Ascending aorta (tissue), 2 donors: ENCODE measurements at regions of chr2 and their contacts with region 1.

Region 1: GRCh38 chr2:128469203-128469602 is 150.5 kb upstream of the HS6ST1 start:
- DNase-seq: no peak
- H3K4me3 ChIP-seq: no peak overlapping the region
- H3K27ac ChIP-seq: no peak overlapping the region
- H3K4me1 ChIP-seq: peaks cover 0 to 4% of the 10 kb centered on the region in 2 donors
- H3K27me3 ChIP-seq: no peaks in the 10 kb centered on the region
- CTCF ChIP-seq: no peak

Region 2: DNA sequence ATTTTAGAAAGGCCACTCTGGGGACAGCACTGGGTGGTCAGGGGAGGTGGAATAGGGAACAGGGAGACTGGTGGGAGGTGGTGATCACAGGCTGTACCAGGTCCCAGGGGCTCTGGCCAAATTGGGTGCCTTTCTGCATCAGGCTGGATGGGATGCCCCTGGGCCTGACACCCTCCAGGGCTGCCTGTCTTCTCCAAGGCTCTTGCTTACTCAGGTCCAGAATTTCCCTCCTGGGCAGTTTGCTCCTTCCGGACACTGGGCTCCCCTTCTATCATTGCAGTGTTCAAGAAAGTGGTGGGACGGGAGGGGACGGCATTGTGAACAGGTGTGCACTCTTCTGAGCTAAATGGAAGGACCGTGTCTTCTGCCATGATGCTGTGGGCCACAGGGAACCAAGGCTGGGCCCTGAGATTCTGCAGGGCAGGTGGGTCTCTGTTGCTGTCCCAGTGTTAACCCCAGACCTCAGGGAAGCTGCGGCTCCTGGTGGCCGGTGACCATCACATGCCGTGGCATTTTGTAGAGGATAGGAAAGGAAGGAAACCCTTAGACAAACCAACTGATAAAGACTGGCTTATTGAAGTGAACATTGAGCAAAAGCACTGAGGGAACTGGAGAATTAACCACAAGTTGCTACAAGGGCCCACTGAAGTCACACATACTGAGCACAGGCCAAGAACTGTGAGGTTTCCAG is 56.9 kb before region 1 on chr2:
- intact Hi-C with region 1: no loop called
- DNase-seq: peak in 1 of 2 donors; percentile 50
- H3K4me3 ChIP-seq: no peak overlapping the region
- H3K27ac ChIP-seq: no peak overlapping the region
- H3K4me1 ChIP-seq: no peaks in the 10 kb centered on the region
- H3K27me3 ChIP-seq: no peaks in the 10 kb centered on the region
- CTCF ChIP-seq: no peak

Region 3: DNA sequence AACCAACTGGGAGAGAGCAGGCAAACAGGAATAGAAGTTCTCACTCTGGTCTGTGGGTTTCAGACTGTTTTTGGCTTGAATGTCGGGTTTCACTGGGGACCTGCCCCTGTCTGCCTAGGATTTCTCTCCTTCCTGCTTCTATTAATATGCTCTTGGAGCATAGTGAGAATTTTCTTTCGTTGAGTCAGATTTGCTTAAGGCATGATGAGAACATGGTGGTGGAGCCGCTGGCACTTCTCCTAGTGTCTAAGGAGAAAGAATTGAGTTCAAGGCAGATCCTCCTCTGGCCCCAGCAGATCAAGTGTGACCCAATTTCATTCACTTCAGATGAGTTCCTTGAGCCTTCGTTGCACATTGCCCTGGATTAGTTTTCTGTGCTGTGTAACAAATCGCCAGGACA is 46.6 kb before region 1 on chr2:
- intact Hi-C with region 1: loop called (anchors 2 kb)
- DNase-seq: peak in 1 of 2 donors; percentile 79
- H3K4me3 ChIP-seq: peak overlapping the region in 1 of 2 donors; percentile 8
- H3K27ac ChIP-seq: peak overlapping the region; percentile 88 to 89
- H3K4me1 ChIP-seq: peaks cover 5 to 35% of the 10 kb centered on the region in 2 donors
- H3K27me3 ChIP-seq: no peaks in the 10 kb centered on the region
- CTCF ChIP-seq: no peak

Region 4: GRCh38 chr2:128485761-128486639 is 16.8 kb after region 1 on chr2:
- intact Hi-C with region 1: loop called (anchors 2 kb)
- DNase-seq: peak in 1 of 2 donors; percentile 58
- H3K4me3 ChIP-seq: no peak overlapping the region
- H3K27ac ChIP-seq: no peak overlapping the region
- H3K4me1 ChIP-seq: no peaks in the 10 kb centered on the region
- H3K27me3 ChIP-seq: no peaks in the 10 kb centered on the region
- CTCF ChIP-seq: no peak

Region 5: GRCh38 chr2:129428086-129428660 is 959.0 kb after region 1 on chr2:
- intact Hi-C with region 1: no loop called
- DNase-seq: no peak
- H3K4me3 ChIP-seq: no peak overlapping the region
- H3K27ac ChIP-seq: no peak overlapping the region
- H3K4me1 ChIP-seq: no peaks in the 10 kb centered on the region
- H3K27me3 ChIP-seq: no peaks in the 10 kb centered on the region
- CTCF ChIP-seq: no peak